ENCODE measurements at regions of chr4 and their contacts with region 1.

Region 1: GRCh38 chr4:7664106-7664505 is 229.4 kb upstream of the PSAPL1 start:
- DNase-seq: no peak
- ATAC-seq: no peak

Region 2: DNA sequence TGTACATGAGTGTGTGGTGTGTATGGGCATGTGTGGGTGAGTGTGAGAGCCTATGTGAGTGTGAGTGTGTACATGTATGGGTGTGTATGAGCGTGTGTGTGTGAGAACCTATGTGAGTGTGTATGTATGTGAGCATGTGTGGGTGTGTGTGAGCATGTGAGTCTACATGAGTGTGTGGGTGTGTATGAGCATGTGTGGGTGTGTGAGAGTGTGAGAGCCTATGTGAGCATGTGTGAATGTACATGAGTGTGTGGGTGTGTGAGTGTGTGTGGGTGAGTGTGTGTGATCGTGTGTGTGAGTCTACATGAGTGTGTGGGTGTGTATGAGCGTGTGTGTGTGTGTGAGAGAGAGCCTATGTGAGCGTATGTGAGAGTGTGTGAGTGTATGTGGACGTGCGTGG is 24.0 kb before region 1 on chr4:
- intact Hi-C with region 1: loop called (anchors 2 kb)
- DNase-seq: no peak
- ATAC-seq: no peak

Region 3: DNA sequence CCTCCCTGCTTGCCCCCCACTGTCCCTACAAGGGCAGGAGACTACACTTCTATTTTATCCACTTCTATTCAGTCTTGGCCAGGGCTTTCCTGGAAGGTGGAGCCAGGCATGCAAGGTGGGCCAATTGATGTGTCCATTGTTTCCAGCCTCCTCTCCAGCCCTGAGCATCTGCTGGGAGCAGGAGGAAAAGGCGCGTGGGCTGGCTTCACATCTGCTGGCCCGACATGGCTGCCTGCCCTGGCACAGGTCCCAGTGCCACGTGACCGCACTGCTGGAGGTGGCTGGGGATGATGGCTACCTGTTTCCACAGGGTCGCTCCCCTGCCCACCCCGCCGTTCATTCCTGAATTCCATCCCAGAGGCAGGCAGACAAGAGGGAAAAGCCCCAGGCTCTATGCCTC is 27.9 kb after region 1 on chr4:
- intact Hi-C with region 1: no loop called
- DNase-seq: no peak
- ATAC-seq: peak; percentile 54

Region 4: GRCh38 chr4:7823416-7823824 is 159.3 kb after region 1 on chr4:
- intact Hi-C with region 1: no loop called
- DNase-seq: no peak
- ATAC-seq: peak; percentile 87